ENCODE measurements at regions of chr2 and their contacts with region 1.

Region 1: DNA sequence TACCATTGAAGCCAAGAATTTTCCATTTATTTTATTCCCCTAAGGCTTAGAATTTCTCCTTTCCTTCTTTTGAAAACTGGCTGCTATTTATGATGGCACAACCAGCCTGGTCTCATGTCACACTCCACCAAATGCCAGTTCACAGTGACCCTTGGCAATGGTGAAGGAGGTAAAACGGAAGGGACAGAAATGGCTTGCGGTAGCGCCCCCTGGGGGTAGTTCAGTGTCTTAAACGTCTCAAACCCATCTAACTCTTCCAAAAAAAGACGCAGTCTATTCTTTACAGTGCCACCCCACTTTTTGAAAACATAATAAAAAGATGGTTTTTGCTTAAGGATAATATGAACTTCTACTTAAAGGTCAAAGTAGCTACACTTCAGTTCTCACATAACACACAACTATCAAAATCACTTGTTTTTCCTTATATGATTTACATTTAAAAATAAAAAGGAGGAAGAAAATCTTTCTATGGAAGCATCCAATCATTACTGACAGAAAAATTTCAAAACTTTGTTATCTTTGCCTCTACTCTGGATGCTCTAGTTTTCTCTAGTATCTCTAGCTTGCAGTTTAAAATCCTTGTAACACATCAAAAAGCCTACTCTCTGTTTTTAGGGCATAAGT is 28.0 kb downstream of the PNO1 start:
- DNase-seq: peak; percentile 47 to 80
- H3K4me3 ChIP-seq: no peak overlapping the region
- H3K27ac ChIP-seq: no peak overlapping the region
- H3K4me1 ChIP-seq: no peaks in the 10 kb centered on the region
- H3K27me3 ChIP-seq: no peaks in the 10 kb centered on the region
- CTCF ChIP-seq: peak; percentile 72 to 79 (median 72)
- EP300 ChIP-seq: no peak
- POLR2A ChIP-seq: no peak
- RAD21 ChIP-seq: peak; percentile 41 to 48; a peak in 3 of 4 replicates

Region 2: GRCh38 chr2:67895227-67895941 is 290.3 kb before region 1 on chr2:
- CTCF ChIA-PET with region 1: no interaction called
- POLR2A ChIA-PET with region 1: no interaction called
- DNase-seq: peak; percentile 5 to 52
- H3K4me3 ChIP-seq: peak overlapping the region in 1 of 4 experiments; percentile 14; a peak in 2 of 8 replicates
- H3K27ac ChIP-seq: no peak overlapping the region
- H3K4me1 ChIP-seq: peaks cover 2 to 14% (median 6%) of the 10 kb centered on the region in 4 experiments; a peak in 6 of 7 replicates
- H3K27me3 ChIP-seq: peaks cover 0 to 3% (median 2%) of the 10 kb centered on the region in 4 experiments; a peak in 4 of 7 replicates
- CTCF ChIP-seq: no peak
- EP300 ChIP-seq: no peak
- POLR2A ChIP-seq: no peak
- RAD21 ChIP-seq: peak in 1 of 2 experiments; percentile 12; a peak in 1 of 4 replicates

Region 3: GRCh38 chr2:68018727-68019126 is 166.9 kb before region 1 on chr2:
- CTCF ChIA-PET with region 1: no interaction called
- POLR2A ChIA-PET with region 1: no interaction called
- DNase-seq: no peak
- H3K4me3 ChIP-seq: no peak overlapping the region
- H3K27ac ChIP-seq: no peak overlapping the region
- H3K4me1 ChIP-seq: no peaks in the 10 kb centered on the region
- H3K27me3 ChIP-seq: no peaks in the 10 kb centered on the region
- CTCF ChIP-seq: no peak
- EP300 ChIP-seq: no peak
- POLR2A ChIP-seq: no peak
- RAD21 ChIP-seq: no peak

Region 4: DNA sequence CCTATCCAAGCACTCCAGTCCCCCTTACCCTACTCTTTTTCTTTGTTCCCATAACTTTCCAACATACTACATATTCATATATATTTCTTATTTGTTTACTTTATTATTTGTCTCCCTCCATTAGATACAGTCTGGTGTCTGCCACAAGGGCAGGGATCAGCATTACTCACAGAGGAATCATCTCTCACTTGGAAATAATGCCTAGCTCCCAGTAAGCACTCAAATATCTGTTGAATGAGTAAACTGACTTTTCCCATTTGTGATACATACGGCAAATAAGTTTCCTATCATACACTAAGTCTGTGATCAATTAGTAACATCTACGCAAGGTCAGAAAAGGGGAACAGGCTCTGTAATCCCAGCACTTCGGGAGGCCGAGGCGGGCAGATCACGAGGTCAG is 141.6 kb before region 1 on chr2:
- CTCF ChIA-PET with region 1: no interaction called
- POLR2A ChIA-PET with region 1: no interaction called
- DNase-seq: no peak
- H3K4me3 ChIP-seq: no peak overlapping the region
- H3K27ac ChIP-seq: no peak overlapping the region
- H3K4me1 ChIP-seq: no peaks in the 10 kb centered on the region
- H3K27me3 ChIP-seq: no peaks in the 10 kb centered on the region
- CTCF ChIP-seq: no peak
- EP300 ChIP-seq: no peak
- POLR2A ChIP-seq: no peak
- RAD21 ChIP-seq: no peak

Region 5: GRCh38 chr2:68169297-68169696 is 16.4 kb before region 1 on chr2:
- CTCF ChIA-PET with region 1: interaction called, 10 read pairs
- POLR2A ChIA-PET with region 1: interaction called, 11 read pairs
- DNase-seq: no peak
- H3K4me3 ChIP-seq: no peak overlapping the region
- H3K27ac ChIP-seq: no peak overlapping the region
- H3K4me1 ChIP-seq: no peaks in the 10 kb centered on the region
- H3K27me3 ChIP-seq: no peaks in the 10 kb centered on the region
- CTCF ChIP-seq: peak in 1 of 3 experiments; percentile 25; a peak in 1 of 4 replicates
- EP300 ChIP-seq: no peak
- POLR2A ChIP-seq: no peak
- RAD21 ChIP-seq: no peak

Measured in H1 (cell line).